ENCODE measurements at regions of chr19 and their contacts with region 1.

Region 1: GRCh38 chr19:46392243-46392801 is 21.0 kb downstream of the CCDC8 start:
- DNase-seq: no peak
- H3K4me3 Mint-ChIP-seq: no peak overlapping the region
- H3K27ac Mint-ChIP-seq: no peak overlapping the region
- H3K4me1 Mint-ChIP-seq: peaks cover 4% of the 10 kb centered on the region
- H3K27me3 Mint-ChIP-seq: no peaks in the 10 kb centered on the region

Region 2: DNA sequence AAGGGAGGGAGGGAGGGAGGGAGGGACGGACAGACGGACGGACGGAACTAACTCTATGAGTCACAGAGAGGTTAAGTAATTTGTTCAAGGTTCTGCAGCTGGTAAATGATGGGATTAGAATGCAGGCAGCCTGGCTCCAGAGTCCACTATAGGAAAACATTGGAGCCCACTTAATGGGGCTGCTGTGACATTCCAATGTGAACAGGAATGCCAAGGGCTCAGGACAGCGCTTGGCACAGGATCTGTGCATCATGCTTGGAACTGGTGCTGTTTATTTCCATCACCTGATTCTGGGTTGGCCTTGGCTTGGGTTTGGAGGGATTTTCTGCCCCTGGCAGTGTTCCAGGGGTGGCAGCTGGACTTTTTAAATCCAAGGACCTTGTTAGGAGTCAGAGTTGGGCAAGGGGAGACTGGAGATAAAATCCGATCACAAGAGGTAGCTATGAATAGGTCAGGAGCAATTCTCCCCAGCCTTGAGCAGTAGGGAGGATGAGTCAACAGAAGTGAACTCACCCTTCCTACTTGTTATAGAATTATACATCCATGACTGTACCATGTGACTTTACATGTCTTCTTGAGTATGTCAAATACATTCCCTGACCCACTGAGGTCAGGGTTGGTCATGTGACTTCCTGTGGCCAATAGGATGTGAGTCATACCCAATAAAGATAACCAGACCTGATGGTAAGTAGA is 103.3 kb before region 1 on chr19:
- intact Hi-C with region 1: loop called (anchors 10 kb)
- DNase-seq: no peak
- H3K4me3 Mint-ChIP-seq: no peak overlapping the region
- H3K27ac Mint-ChIP-seq: no peak overlapping the region
- H3K4me1 Mint-ChIP-seq: no peaks in the 10 kb centered on the region
- H3K27me3 Mint-ChIP-seq: no peaks in the 10 kb centered on the region

Measured in activated T-helper 2 cell treated with anti-CD3 and anti-CD28 coated beads, Interferon-gamma antibody, Interleukin-2, Interleukin-4, amounts not matched to agents 10 μg/mL and 5 μg/mL and 100 μg/mL, durations not matched to agents 14 hours and 24 hours and 36 hours (primary cell).